ENCODE measurements at regions of chr7 and their contacts with region 1.

Region 1: DNA sequence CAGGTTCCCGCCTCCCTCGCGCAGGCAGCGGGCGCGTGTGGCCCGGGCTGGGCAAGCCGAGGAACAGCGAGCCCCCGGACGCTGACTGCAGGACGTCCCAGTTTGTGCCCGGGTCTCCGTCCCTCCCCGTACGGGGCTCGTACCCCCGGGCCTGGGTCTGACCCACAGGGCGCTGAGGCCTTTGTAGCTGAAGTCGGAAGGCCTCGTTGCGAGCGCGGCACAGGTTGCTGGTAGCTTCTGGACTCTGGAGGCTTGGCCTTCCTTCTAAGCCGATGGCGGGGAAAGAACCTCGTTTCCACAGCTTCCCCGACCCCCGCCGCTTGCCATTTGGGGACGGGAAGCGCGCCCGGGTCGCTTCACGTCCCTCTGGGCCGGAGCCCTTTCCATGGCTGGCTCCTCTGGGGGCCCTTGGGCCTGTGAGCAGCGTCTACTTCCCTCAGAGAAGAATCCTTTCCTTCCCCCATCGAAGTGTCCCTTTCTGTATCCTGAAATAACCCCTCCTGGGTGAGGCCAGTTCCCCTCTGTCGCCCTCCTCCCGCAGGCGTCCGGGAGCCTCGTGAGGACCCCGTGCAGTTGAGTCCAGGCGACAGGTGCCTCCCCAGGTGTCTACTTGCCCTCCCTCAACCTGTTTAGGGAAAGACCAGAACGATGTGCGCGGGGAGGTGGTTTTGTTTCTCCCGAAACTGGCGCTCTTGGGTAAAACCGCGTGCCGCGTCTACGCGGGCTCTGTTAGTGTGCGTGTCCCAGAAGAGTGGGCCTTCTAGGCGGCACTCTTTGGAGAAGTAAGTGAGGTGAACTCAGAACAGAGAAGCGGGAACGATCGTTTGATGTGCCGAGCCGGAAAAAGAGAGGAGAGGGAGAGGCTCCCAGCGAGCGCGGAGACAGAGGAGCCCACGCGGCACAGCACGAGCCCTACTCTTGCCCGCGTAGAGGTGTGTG is 9.3 kb downstream of the EVX1 start:
- DNase-seq: no peak
- ATAC-seq: no peak
- H3K4me3 ChIP-seq: no peak overlapping the region
- H3K27ac ChIP-seq: no peak overlapping the region
- H3K4me1 ChIP-seq: no peaks in the 10 kb centered on the region
- H3K27me3 ChIP-seq: peaks cover 79% of the 10 kb centered on the region
- CTCF ChIP-seq: no peak
- POLR2A ChIP-seq: no peak
- RAD21 ChIP-seq: no peak

Region 2: DNA sequence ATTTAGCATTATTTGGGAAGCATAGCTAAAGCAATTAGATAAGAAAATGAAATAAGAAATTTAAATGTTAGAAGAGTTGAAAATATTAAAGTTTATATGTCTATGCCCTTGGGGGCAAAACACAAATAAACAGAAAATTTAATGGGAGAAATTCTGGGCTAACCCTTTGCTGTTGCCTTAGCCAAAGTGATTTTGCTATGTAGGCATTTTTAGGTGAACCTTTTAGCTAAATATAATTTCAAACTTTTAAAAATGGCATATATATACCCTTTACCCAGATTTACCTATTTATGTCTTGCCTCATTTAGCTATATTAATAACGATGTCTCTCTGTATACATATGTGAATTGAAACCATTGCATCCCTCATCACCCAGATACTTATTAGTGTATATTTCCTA is 1079.9 kb before region 1 on chr7:
- CTCF ChIA-PET with region 1: no interaction called
- POLR2A ChIA-PET with region 1: interaction called, 11 read pairs
- dilution Hi-C with region 1: no loop called
- in situ Hi-C with region 1: no loop called
- intact Hi-C with region 1: no loop called
- DNase-seq: no peak
- ATAC-seq: no peak
- H3K4me3 ChIP-seq: no peak overlapping the region
- H3K27ac ChIP-seq: no peak overlapping the region
- H3K4me1 ChIP-seq: peaks cover 3% of the 10 kb centered on the region; the same call in 1 of the 2 replicates
- H3K27me3 ChIP-seq: no peaks in the 10 kb centered on the region
- CTCF ChIP-seq: no peak
- POLR2A ChIP-seq: no peak
- RAD21 ChIP-seq: no peak

Region 3: GRCh38 chr7:26789481-26790184 is 462.3 kb before region 1 on chr7:
- CTCF ChIA-PET with region 1: no interaction called
- POLR2A ChIA-PET with region 1: no interaction called
- dilution Hi-C with region 1: no loop called
- in situ Hi-C with region 1: no loop called
- intact Hi-C with region 1: no loop called
- DNase-seq: no peak
- ATAC-seq: no peak
- H3K4me3 ChIP-seq: no peak overlapping the region
- H3K27ac ChIP-seq: no peak overlapping the region
- H3K4me1 ChIP-seq: no peaks in the 10 kb centered on the region
- H3K27me3 ChIP-seq: no peaks in the 10 kb centered on the region
- CTCF ChIP-seq: no peak
- POLR2A ChIP-seq: no peak
- RAD21 ChIP-seq: no peak

Region 4: GRCh38 chr7:27046854-27047549 is 204.9 kb before region 1 on chr7:
- CTCF ChIA-PET with region 1: no interaction called
- POLR2A ChIA-PET with region 1: no interaction called
- dilution Hi-C with region 1: no loop called
- in situ Hi-C with region 1: no loop called
- intact Hi-C with region 1: no loop called
- DNase-seq: peak; percentile 77
- ATAC-seq: peak; percentile 77
- H3K4me3 ChIP-seq: no peak overlapping the region
- H3K27ac ChIP-seq: peak overlapping the region; percentile 49
- H3K4me1 ChIP-seq: no peaks in the 10 kb centered on the region
- H3K27me3 ChIP-seq: no peaks in the 10 kb centered on the region
- CTCF ChIP-seq: no peak
- POLR2A ChIP-seq: no peak
- RAD21 ChIP-seq: no peak

Region 5: GRCh38 chr7:27295236-27295635 is 43.3 kb after region 1 on chr7:
- CTCF ChIA-PET with region 1: no interaction called
- POLR2A ChIA-PET with region 1: no interaction called
- dilution Hi-C with region 1: no loop called
- in situ Hi-C with region 1: no loop called
- intact Hi-C with region 1: no loop called
- DNase-seq: no peak
- ATAC-seq: no peak
- H3K4me3 ChIP-seq: no peak overlapping the region
- H3K27ac ChIP-seq: no peak overlapping the region
- H3K4me1 ChIP-seq: no peaks in the 10 kb centered on the region
- H3K27me3 ChIP-seq: no peaks in the 10 kb centered on the region
- CTCF ChIP-seq: no peak
- POLR2A ChIP-seq: no peak
- RAD21 ChIP-seq: no peak

Region 6: DNA sequence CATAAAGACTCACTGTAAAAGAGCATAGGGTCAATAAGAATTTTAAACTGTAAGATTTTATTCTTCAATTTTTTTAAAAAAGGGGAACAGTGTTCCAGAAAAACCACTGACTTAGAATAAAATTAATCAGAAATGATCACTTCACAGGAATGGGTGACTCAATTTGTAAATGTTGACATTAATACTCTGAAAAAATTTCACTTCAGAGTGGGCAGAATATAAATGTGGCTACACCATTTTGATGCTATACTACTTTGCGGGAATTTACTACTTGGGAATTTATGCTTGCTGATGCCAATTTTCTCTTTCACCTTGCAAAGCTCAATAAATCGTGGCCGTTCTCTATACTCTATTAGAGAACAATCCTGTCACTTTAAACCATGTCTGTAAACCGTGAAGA is 283.9 kb after region 1 on chr7:
- CTCF ChIA-PET with region 1: no interaction called
- POLR2A ChIA-PET with region 1: no interaction called
- dilution Hi-C with region 1: no loop called
- in situ Hi-C with region 1: no loop called
- intact Hi-C with region 1: no loop called
- DNase-seq: peak; percentile 12
- ATAC-seq: no peak
- H3K4me3 ChIP-seq: no peak overlapping the region
- H3K27ac ChIP-seq: no peak overlapping the region
- H3K4me1 ChIP-seq: peaks cover 11% of the 10 kb centered on the region
- H3K27me3 ChIP-seq: no peaks in the 10 kb centered on the region
- CTCF ChIP-seq: no peak
- POLR2A ChIP-seq: no peak
- RAD21 ChIP-seq: no peak